Sciatic nerve (tissue), 2 donors: ENCODE measurements at regions of chr5 and their contacts with region 1.

Region 1: DNA sequence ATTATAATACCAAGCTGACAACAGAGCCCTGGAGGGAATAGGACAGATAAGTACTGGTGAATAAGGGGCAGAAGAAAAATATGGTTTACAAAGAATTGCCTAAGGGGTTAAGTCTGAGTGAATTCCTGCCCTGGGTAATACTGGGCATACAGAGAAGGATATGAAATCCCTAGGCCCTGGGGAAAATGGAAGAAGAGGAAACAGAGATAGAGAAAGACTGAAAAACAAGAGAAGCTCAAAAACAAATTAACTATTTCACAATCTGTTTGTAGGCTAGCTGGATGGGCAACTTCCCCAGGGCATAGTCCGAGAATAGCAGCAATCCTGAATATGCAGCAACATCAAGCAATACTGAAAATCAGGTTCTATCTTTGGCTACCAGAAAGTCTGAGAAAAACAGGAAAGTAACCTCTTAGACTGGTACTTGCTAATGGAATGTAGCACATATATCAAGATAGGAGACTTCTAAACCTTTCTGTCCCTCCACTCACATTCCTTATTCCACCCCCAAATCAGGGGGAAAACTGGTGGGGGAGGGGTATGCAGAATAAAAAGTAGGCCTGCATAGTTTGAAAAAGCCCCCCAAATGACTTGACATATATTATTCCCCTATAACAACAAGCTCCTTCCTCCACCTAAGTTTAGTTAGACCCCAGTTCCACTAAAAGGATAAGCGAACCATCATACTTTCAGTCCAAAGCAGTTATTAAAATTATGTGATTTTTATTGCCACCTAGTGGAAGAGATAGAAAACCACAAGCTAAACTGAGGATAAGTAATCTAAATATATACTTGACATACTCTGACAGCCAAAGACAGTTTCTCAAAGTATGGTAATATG is 20.6 kb downstream of the SLC38A9 start:
- DNase-seq: no peak
- ATAC-seq: peak; percentile 81

Region 2: DNA sequence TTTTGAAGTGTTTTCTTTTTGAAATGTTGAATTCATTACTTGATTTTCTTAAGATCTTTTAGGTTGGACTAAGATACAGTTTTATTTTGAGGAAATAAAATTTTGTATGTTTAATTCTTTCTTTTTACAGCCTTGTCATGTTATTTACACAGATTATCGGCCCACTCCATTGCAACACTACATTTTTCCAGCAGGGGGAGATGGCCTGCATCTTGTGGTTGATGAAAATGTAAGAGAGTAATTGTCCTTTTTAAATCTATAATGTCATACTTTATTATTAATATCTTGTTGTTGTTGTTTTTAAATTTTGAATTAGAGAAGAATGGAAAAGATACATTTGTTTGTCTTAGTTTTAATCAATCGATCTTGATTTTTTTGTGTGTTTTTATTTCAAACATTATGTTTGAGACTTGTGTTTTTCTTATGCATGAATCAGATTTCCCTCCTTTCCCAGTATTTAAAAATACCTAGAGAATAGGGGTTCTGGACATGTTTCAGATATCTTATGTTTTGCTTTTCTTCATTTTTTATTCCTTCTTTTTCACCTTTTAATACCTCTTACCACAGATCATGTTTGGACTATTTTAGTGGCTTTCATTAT is 347.0 kb before region 1 on chr5:
- intact Hi-C with region 1: loop called (anchors 10 kb)
- DNase-seq: peak; percentile 73
- ATAC-seq: peak; percentile 60

Region 3: GRCh38 chr5:55418994-55419968 is 272.2 kb before region 1 on chr5:
- intact Hi-C with region 1: loop called (anchors 5 kb)
- DNase-seq: no peak
- ATAC-seq: peak; percentile 35